Activated naive CD4-positive, alpha-beta T cell treated with anti-CD3 and anti-CD28 coated beads, Interleukin-2, amount 10 ng/mL, durations not matched to agents 7 days and 5 days (primary cell): ENCODE measurements at regions of chr13 and their contacts with region 1.

Region 1: DNA sequence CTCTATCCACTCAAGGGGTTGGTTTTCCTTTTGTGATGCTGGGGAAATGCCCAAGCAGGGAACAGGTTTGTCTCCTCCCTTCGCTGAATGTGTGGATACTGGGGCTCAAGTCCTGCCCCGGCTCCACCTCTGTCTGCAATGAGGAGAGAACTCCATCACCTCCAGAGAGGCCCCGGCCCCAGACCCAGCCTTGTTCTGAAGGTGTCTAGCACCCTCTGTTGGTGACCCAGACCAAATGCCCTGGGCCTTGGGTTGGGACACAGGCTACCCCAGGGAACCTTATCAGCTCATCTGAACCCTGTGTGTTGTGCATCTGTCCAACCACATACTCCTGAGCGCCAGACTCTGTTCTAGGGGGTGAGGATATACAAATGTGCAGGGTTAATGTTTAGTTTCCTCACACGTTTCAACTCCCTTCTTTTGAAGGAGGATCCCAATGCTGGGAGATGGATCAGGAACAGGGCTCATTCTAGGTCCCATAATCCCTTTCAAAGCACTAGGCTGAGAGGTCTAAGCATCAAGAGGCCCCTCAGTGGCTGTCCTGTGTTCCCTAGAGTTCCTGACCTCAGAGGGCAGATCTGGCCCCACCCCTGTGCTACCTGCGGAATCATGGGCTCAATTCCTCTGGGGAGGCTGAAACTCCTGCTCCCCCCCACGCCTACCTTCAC is 112.5 kb upstream of the SLC7A1 start:
- DNase-seq: peak; percentile 63
- H3K4me3 Mint-ChIP-seq: no peak overlapping the region
- H3K27ac Mint-ChIP-seq: no peak overlapping the region
- H3K4me1 Mint-ChIP-seq: no peaks in the 10 kb centered on the region
- H3K27me3 Mint-ChIP-seq: peaks cover 27% of the 10 kb centered on the region

Region 2: GRCh38 chr13:29472332-29472961 is 235.6 kb before region 1 on chr13:
- CTCF ChIA-PET with region 1: interaction called, 13 read pairs
- DNase-seq: peak; percentile 69
- H3K4me3 Mint-ChIP-seq: no peak overlapping the region
- H3K27ac Mint-ChIP-seq: no peak overlapping the region
- H3K4me1 Mint-ChIP-seq: no peaks in the 10 kb centered on the region
- H3K27me3 Mint-ChIP-seq: peaks cover 8% of the 10 kb centered on the region

Region 3: DNA sequence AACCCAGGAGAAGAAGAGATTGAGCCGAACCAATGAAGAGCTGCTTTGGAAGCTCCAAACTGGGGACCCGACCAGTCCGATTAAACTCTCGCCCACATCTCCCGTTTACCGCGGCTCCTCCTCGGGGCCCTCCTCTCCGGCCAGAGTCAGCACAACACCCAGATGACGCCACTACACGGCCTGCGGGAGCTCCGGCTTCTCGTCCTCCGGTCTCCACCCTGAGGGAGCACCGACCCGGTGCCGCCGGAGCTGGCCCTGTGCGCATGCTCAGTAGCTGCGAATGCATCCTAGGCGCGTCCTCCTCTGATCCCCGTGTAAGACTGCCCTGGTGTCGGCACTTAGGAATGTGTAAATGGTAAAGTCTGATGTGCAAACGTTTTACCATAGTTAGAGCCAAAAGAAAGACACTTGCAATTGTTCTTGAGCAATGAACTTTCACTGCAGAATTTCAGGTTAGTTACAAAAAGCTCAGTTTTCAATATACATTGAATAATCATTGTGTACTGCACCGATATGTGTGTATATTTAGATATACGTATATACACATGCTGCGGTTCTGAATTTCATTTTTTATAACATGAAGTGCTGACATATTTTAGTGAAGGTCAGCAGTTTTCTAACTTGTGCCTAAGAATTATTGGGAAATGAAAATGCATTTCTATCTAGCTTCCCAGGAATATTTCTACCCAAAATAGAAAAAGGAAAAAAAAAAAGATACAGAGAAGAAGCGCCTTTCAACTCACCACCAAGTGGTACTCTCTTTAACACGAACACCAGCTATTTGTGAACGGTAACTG is 204.8 kb before region 1 on chr13:
- CTCF ChIA-PET with region 1: interaction called, 47 read pairs
- DNase-seq: peak; percentile 29
- H3K4me3 Mint-ChIP-seq: no peak overlapping the region
- H3K27ac Mint-ChIP-seq: no peak overlapping the region
- H3K4me1 Mint-ChIP-seq: no peaks in the 10 kb centered on the region
- H3K27me3 Mint-ChIP-seq: peaks cover 29% of the 10 kb centered on the region

Region 4: GRCh38 chr13:29508130-29508875 is 199.7 kb before region 1 on chr13:
- CTCF ChIA-PET with region 1: interaction called, 47 read pairs
- DNase-seq: peak; percentile 79
- H3K4me3 Mint-ChIP-seq: no peak overlapping the region
- H3K27ac Mint-ChIP-seq: no peak overlapping the region
- H3K4me1 Mint-ChIP-seq: no peaks in the 10 kb centered on the region
- H3K27me3 Mint-ChIP-seq: peaks cover 4% of the 10 kb centered on the region

Region 5: DNA sequence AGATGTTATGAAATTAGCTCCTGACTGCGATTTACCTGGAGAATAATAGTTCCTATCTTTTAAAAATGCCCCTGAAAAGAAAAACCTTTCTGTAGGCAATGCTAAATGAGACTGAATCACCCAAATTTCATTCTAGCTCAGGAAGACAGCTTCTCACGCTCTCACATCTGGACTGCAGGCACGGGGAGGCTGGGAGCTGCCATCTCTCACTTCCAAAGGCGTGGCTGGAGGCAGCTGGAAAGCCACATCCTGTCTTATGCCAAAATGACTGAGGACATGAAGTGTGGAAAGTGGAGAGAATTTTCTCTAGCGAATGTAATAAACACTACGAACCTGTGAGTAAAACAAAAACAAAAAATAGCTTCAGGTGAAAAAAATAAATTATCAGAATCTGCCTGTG is 200.4 kb after region 1 on chr13:
- CTCF ChIA-PET with region 1: no interaction called
- DNase-seq: no peak
- H3K4me3 Mint-ChIP-seq: no peak overlapping the region
- H3K27ac Mint-ChIP-seq: no peak overlapping the region
- H3K4me1 Mint-ChIP-seq: peaks cover 12% of the 10 kb centered on the region
- H3K27me3 Mint-ChIP-seq: peaks cover 8% of the 10 kb centered on the region